RWPE1 (cell line): ENCODE measurements at regions of chr10 and their contacts with region 1.

Region 1: GRCh38 chr10:102629661-102630614 is 14.3 kb upstream of the TRIM8 start:
- DNase-seq: peak; percentile 79
- H3K27ac ChIP-seq: peak overlapping the region; percentile 78
- CTCF ChIP-seq: no peak

Region 2: DNA sequence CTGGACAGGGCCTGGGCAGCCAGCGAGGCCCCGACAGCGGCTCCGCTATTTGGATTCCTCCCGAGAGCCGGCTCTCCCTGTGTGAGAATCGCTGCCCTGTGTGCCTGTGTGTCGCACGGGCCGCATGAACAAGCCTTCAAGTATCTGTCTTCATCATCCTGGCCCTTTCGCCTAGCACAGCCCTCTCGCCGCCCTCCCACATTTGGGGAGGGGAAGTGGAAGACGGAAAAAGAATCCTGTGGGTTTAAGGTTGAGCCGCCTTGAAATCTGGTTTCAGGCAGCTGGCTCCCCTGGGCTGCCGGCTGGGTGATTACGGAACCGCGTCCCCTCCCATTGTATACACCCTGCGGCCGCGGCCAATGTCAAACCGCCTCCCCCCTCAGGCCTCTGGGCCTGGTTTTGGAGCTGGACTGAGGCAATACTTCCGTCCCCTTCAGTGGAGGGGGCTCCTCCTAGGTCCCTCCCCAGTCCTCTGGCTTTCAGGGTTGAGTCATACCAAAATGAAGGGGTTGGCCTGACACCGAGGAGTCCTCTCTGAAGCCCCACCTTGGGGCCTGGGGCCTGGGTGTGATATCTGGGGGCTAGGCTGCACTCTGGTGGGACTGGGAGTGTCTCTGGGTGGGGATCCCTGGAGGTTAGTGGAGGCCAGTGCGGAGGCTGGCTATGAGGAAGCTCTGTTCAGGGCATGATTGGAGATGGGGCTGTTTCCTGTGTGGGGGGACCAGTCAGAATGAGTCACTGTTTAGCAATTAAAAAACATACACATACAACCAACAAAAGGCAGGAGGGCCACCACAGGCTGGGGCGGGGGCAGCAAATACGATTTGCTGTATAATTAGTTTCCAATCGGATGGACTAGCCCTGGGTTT is 16.0 kb after region 1 on chr10:
- CTCF ChIA-PET with region 1: interaction called, 3 read pairs
- POLR2A ChIA-PET with region 1: interaction called, 16 read pairs
- DNase-seq: peak; percentile 96
- H3K27ac ChIP-seq: peak overlapping the region; percentile 100
- CTCF ChIP-seq: no peak

Region 3: GRCh38 chr10:102669206-102670064 is 39.5 kb after region 1 on chr10:
- CTCF ChIA-PET with region 1: no interaction called
- POLR2A ChIA-PET with region 1: no interaction called
- DNase-seq: peak; percentile 47
- H3K27ac ChIP-seq: peak overlapping the region; percentile 84
- CTCF ChIP-seq: no peak